CD4-positive, alpha-beta T cell (primary cell): ENCODE measurements at regions of chr4 and their contacts with region 1.

Region 1: DNA sequence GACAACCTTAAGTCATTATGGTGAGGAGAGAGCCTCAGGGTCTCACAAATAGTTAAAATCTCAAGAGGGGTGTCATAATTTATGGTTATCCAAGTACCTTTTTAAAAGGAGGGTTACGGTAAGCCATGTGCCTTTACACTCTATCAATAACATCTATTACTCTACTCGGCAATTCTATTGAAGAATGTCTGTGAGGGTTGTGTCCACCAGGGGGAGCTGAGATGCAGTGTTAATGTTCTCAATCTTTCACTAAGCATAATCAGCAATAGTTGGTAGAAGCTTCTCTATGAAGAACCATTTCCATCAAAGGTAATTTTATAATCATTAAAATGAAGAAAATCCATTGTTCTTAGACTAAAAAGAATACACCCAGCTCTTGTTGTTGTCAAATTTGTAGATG is 457.4 kb downstream of the CENPC start:
- DNase-seq: peak in 8 of 14 experiments; percentile 3 to 41 (median 24)
- ATAC-seq: no peak
- H3K4me3 ChIP-seq: no peak overlapping the region
- H3K4me3 Mint-ChIP-seq: no peak overlapping the region
- H3K27ac ChIP-seq: no peak overlapping the region
- H3K27ac Mint-ChIP-seq: no peak overlapping the region
- H3K4me1 ChIP-seq: no peaks in the 10 kb centered on the region
- H3K4me1 Mint-ChIP-seq: no peaks in the 10 kb centered on the region
- H3K27me3 ChIP-seq: peaks cover 0 to 5% of the 10 kb centered on the region in 2 experiments
- H3K27me3 Mint-ChIP-seq: no peaks in the 10 kb centered on the region
- CTCF ChIP-seq: peak; percentile 58

Region 2: GRCh38 chr4:66246643-66247042 is 841.3 kb before region 1 on chr4:
- CTCF ChIA-PET with region 1: no interaction called
- POLR2A ChIA-PET with region 1: no interaction called
- intact Hi-C with region 1: no loop called
- DNase-seq: no peak
- ATAC-seq: no peak
- H3K4me3 ChIP-seq: no peak overlapping the region
- H3K4me3 Mint-ChIP-seq: no peak overlapping the region
- H3K27ac ChIP-seq: no peak overlapping the region
- H3K27ac Mint-ChIP-seq: no peak overlapping the region
- H3K4me1 ChIP-seq: no peaks in the 10 kb centered on the region
- H3K4me1 Mint-ChIP-seq: no peaks in the 10 kb centered on the region
- H3K27me3 ChIP-seq: no peaks in the 10 kb centered on the region
- H3K27me3 Mint-ChIP-seq: no peaks in the 10 kb centered on the region
- CTCF ChIP-seq: no peak

Region 3: DNA sequence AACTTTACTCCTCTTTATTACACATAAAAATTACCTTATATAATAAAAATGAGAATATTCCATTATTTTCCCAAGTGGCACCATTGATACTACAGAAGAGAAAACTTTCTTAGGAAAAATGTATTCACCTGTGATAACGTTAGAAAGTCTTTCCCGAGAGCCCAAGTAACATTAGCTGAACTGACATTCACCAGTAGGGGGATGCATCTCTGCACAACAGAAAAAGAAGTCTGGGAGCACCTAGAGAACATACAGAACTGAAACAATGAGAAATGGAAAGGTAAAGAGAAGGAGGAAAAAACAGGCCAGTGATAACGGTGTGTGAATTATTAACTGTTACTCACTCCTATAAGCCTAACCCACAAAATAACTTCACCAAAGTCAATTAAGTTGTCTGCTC is 34.1 kb after region 1 on chr4:
- CTCF ChIA-PET with region 1: no interaction called
- POLR2A ChIA-PET with region 1: no interaction called
- intact Hi-C with region 1: no loop called
- DNase-seq: no peak
- ATAC-seq: no peak
- H3K4me3 ChIP-seq: no peak overlapping the region
- H3K4me3 Mint-ChIP-seq: no peak overlapping the region
- H3K27ac ChIP-seq: no peak overlapping the region
- H3K27ac Mint-ChIP-seq: no peak overlapping the region
- H3K4me1 ChIP-seq: no peaks in the 10 kb centered on the region
- H3K4me1 Mint-ChIP-seq: no peaks in the 10 kb centered on the region
- H3K27me3 ChIP-seq: no peaks in the 10 kb centered on the region
- H3K27me3 Mint-ChIP-seq: no peaks in the 10 kb centered on the region
- CTCF ChIP-seq: no peak

Region 4: DNA sequence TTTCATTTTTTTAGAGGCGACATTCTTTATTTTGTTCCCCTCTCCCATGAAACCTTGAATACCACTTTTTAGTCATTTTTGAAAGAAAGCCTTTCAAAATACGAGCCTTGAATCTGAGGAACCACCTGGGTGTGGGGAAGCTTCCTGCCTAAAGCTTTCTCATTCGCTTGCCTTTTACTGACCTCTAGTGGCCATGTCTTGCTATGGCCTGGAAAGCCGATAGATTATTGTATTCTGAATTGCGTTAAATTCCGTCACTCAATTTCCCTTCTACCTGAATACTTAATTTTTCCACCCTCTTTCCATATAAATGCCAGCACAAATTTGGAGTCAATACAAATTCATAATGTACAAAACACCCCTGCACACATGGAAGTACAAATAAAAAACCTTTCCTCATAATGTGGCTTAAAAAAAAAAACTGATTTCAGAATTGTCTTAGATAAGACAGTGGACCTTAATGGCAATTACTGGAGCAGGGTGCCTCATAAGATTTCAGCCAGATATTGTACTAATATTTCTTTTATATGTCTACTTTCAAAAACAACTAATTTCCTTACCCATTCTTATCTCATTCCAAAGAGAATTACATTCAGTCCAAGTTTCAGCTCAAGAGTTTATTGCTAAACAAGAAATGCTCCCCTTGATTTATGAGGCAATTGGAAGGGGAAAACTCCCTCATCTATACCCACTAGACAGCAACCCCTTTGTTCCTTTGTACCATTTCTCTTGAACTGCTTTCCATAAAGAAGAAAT is 239.5 kb after region 1 on chr4:
- CTCF ChIA-PET with region 1: no interaction called
- POLR2A ChIA-PET with region 1: interaction called, 3 read pairs
- intact Hi-C with region 1: loop called (anchors 1 to 5 kb)
- DNase-seq: peak in 13 of 14 experiments; percentile 3 to 65 (median 16)
- ATAC-seq: peak; percentile 63
- H3K4me3 ChIP-seq: no peak overlapping the region
- H3K4me3 Mint-ChIP-seq: no peak overlapping the region
- H3K27ac ChIP-seq: no peak overlapping the region
- H3K27ac Mint-ChIP-seq: no peak overlapping the region
- H3K4me1 ChIP-seq: no peaks in the 10 kb centered on the region
- H3K4me1 Mint-ChIP-seq: no peaks in the 10 kb centered on the region
- H3K27me3 ChIP-seq: peaks cover 0 to 5% of the 10 kb centered on the region in 2 experiments
- H3K27me3 Mint-ChIP-seq: peaks cover 33% of the 10 kb centered on the region
- CTCF ChIP-seq: peak; percentile 82

Region 5: GRCh38 chr4:68175562-68176155 is 1087.8 kb after region 1 on chr4:
- CTCF ChIA-PET with region 1: no interaction called
- POLR2A ChIA-PET with region 1: no interaction called
- intact Hi-C with region 1: loop called in 1 of 2 experiments (anchors 5 kb)
- DNase-seq: peak in 4 of 14 experiments; percentile 8 to 47 (median 36)
- ATAC-seq: no peak
- H3K4me3 ChIP-seq: no peak overlapping the region
- H3K4me3 Mint-ChIP-seq: no peak overlapping the region
- H3K27ac ChIP-seq: no peak overlapping the region
- H3K27ac Mint-ChIP-seq: no peak overlapping the region
- H3K4me1 ChIP-seq: no peaks in the 10 kb centered on the region
- H3K4me1 Mint-ChIP-seq: no peaks in the 10 kb centered on the region
- H3K27me3 ChIP-seq: no peaks in the 10 kb centered on the region
- H3K27me3 Mint-ChIP-seq: peaks cover 12% of the 10 kb centered on the region
- CTCF ChIP-seq: peak; percentile 52